Activated CD4-positive, alpha-beta T cell treated with anti-CD3 and anti-CD28 coated beads, Interleukin-2, amount 10 ng/mL, durations not matched to agents 24 days and 14 days (primary cell): ENCODE measurements at regions of chr19 and their contacts with region 1.

Region 1: DNA sequence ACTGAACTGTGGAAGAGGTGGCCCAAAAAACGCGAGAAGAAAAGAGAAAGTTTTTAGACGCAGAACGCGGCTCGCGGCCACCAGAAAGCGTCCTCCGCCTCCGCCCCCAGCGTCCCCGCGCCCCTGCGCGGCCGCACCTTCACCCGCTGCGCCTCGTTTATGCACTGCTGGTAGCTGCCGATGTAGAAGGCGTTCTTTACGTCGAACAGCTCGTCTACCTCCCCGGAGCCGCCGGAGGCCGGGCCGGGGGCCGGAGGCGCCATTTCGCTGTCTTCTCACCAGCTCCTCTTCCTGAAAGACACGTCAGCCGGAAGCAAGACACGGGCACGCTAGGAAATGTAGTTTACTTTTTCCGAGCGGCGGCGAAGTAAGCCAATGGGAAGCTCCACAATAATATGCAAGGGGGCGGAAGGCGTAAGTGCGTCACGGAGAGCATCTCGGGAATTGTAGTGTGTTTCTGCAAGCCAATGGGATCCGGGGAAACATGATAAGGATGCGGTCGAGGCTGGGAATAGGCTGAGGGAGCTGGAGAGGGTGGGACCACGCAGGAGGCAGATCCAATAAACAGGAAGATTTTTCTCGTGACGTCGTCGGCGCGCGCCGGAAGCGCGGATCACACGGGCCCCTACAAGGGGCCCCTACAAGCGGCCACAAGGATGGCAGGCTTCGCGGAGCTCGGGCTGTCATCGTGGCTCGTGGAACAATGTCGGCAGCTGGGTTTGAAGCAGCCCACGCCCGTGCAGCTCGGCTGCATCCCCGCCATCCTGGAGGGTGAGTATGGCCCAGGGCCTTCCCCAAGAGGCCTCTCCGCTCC is at the starts of genes COPE and DDX49:
- DNase-seq: peak; percentile 99
- H3K4me3 Mint-ChIP-seq: peak within 1 kb of the TSS; percentile 96
- H3K27ac Mint-ChIP-seq: peak within 1 kb of the TSS; percentile 92
- H3K4me1 Mint-ChIP-seq: peaks cover 29% of the 10 kb centered on the region
- H3K27me3 Mint-ChIP-seq: no peaks in the 10 kb centered on the region
- total RNA-seq, gene COPE: 206 and 231 TPM in 2 replicates
- total RNA-seq, gene DDX49: 93.2 and 94.9 TPM in 2 replicates

Region 2: GRCh38 chr19:18543816-18544475 is 375.3 kb before region 1 on chr19:
- intact Hi-C with region 1: loop called (anchors 1 kb)
- DNase-seq: peak; percentile 96
- H3K4me3 Mint-ChIP-seq: peak overlapping the region; percentile 99
- H3K27ac Mint-ChIP-seq: peak overlapping the region; percentile 99
- H3K4me1 Mint-ChIP-seq: peaks cover 22% of the 10 kb centered on the region
- H3K27me3 Mint-ChIP-seq: no peaks in the 10 kb centered on the region

Region 3: GRCh38 chr19:18571564-18572300 is 347.6 kb before region 1 on chr19 and contains the start of gene UBA52:
- intact Hi-C with region 1: loop called (anchors 1 kb)
- DNase-seq: peak; percentile 100
- H3K4me3 Mint-ChIP-seq: peak within 1 kb of the TSS; percentile 99
- H3K27ac Mint-ChIP-seq: peak within 1 kb of the TSS; percentile 95
- H3K4me1 Mint-ChIP-seq: peaks cover 24% of the 10 kb centered on the region
- H3K27me3 Mint-ChIP-seq: no peaks in the 10 kb centered on the region
- total RNA-seq, gene UBA52: 1,581 and 1,604 TPM in 2 replicates

Region 4: DNA sequence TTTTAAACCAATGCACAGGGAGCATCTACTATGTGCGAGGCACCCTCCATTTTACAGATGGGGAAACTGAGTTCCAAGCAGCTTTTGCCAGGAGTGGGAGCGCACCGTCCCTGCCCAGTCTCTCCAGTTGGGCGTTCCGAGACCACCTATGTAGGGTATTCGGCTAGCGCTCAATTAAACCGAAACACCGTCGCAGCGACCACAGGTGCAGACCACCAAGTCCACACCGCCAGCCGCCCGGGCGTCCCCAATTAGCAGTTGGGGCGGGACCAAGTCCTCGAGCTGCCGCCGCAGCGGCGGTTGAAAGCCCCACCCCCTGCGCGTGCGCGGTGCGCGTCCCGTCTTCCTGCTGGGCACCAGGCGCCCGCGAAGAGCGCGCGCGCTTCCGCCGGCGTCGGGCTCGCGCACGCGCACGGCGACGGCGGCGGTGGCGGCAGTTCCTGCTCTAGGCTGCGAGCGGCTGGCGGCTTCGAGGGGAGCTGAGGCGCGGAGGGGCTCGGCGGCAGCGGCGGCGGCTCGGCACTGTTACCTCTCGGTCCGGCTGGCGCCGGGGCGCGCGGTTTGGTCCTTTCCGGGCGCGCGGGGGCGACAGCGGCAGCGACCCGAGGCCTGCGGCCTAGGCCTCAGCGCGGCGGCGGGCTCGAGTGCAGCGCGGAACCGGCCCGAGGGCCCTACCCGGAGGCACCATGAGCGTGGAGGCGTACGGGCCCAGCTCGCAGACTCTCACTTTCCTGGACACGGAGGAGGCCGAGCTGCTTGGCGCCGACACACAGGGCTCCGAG is 87.6 kb before region 1 on chr19 and contains the start of gene UPF1:
- intact Hi-C with region 1: loop called (anchors 1 kb)
- DNase-seq: peak; percentile 99
- H3K4me3 Mint-ChIP-seq: peak within 1 kb of the TSS; percentile 98
- H3K27ac Mint-ChIP-seq: peak within 1 kb of the TSS; percentile 95
- H3K4me1 Mint-ChIP-seq: peaks cover 34% of the 10 kb centered on the region
- H3K27me3 Mint-ChIP-seq: peaks cover 9% of the 10 kb centered on the region
- total RNA-seq, gene UPF1: 97.6 and 110 TPM in 2 replicates

Region 5: DNA sequence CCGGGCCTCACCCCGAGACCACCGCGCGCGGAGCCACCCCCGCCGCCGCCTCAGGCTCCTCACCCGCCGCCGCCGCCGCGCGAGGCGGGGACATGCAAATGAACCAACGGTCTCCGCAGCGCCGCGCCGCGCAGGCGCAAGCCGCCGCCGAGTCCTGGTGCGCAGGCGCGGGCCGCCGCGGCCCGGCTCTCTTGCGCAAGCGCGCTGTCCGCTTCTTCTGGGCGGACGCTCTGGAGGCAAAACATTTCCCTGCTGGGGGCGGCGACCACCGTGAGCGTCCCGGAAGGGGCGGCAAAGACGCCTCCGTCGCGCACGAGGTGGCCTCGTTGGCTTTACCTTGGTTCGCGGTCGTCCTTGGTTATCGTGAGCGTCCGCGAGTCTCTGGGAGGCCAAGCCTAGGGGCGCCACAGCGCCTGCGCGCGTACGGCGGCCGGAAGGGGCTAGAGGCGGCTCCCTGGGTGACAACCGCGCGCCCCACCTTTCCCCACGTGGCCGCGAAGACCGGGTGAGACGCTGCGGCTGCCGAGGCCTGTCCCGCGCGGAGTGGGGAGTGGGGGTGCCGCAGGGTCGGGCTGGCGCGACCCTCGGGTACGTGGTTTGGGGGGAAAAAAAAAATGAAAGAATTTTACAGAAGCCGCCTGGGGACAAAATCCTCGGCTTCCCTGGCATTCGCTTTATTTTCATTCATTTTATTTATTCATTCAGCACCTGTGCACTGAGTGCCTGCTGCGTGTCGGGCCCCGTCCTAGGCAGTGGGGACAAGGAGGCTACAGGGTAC is 114.3 kb after region 1 on chr19 and contains the starts of genes ARMC6 and SUGP2:
- intact Hi-C with region 1: loop called (anchors 1 kb)
- DNase-seq: peak; percentile 97
- H3K4me3 Mint-ChIP-seq: peak within 1 kb of the TSS; percentile 95
- H3K27ac Mint-ChIP-seq: peak within 1 kb of the TSS; percentile 96
- H3K4me1 Mint-ChIP-seq: peaks cover 32% of the 10 kb centered on the region
- H3K27me3 Mint-ChIP-seq: peaks cover 1% of the 10 kb centered on the region
- total RNA-seq, gene ARMC6: 57.7 and 61.9 TPM in 2 replicates
- total RNA-seq, gene SUGP2: 114 and 128 TPM in 2 replicates

Region 6: GRCh38 chr19:19214892-19215291 is 295.6 kb after region 1 on chr19:
- intact Hi-C with region 1: no loop called
- DNase-seq: peak; percentile 84
- H3K4me3 Mint-ChIP-seq: no peak overlapping the region
- H3K27ac Mint-ChIP-seq: no peak overlapping the region
- H3K4me1 Mint-ChIP-seq: peaks cover 5% of the 10 kb centered on the region
- H3K27me3 Mint-ChIP-seq: peaks cover 36% of the 10 kb centered on the region